ENCODE measurements at regions of chr12 and their contacts with region 1.

Region 1: DNA sequence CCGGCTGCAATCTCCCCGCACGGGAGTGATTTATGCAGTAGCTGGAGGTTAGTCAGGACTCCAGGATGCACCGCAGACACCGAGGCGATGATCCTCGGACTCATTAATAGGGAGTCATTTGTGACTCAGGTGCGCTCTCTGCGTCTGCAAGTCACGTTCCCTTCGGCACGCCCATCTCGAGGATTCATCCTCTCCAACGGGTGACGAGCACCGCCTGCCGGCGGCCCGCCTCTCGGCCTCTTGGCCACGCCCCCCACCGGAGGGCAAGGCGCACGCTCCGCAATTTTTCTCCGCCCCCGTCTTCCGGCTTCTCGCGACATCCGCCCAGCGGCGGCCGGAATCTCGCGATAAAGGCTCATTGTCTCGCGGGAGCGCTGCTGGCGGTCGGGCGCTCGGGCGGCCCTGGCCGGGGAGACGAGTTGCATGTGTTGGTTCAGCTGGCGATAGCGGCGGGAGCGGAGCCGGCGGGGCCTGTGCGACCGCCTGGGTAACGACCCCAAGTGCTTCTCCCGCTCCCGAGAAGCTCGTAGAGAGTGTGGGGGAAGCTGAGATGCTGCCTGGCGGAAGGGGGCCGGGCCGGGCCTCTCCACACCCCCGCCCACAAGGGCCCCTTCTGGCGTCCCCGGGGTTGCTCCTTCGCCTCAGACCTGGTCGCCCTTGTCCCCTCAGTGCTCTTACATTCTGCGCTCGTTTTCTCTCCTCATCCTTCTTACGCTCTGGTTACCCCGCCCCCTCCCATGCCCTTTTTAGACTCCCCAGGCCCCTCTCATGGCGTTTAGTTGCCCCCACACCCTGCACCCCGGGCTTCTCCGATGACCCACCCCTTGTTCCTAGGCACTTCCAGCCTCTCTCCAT is at the start of gene DENR:
- DNase-seq: peak; percentile 99
- total RNA-seq, gene DENR: 7.3 and 7.4 TPM in 2 replicates

Region 2: GRCh38 chr12:122526683-122527477 is 225.8 kb before region 1 on chr12 and contains the starts of genes KNTC1 and RSRC2:
- in situ Hi-C with region 1: loop called (anchors 25 kb)
- DNase-seq: peak; percentile 100
- total RNA-seq, gene KNTC1: 28.6 and 32.6 TPM in 2 replicates
- total RNA-seq, gene RSRC2: 16.9 and 29.3 TPM in 2 replicates

Measured in Caki2 (cell line).